ENCODE measurements at regions of chr16 and their contacts with region 1.

Region 1: DNA sequence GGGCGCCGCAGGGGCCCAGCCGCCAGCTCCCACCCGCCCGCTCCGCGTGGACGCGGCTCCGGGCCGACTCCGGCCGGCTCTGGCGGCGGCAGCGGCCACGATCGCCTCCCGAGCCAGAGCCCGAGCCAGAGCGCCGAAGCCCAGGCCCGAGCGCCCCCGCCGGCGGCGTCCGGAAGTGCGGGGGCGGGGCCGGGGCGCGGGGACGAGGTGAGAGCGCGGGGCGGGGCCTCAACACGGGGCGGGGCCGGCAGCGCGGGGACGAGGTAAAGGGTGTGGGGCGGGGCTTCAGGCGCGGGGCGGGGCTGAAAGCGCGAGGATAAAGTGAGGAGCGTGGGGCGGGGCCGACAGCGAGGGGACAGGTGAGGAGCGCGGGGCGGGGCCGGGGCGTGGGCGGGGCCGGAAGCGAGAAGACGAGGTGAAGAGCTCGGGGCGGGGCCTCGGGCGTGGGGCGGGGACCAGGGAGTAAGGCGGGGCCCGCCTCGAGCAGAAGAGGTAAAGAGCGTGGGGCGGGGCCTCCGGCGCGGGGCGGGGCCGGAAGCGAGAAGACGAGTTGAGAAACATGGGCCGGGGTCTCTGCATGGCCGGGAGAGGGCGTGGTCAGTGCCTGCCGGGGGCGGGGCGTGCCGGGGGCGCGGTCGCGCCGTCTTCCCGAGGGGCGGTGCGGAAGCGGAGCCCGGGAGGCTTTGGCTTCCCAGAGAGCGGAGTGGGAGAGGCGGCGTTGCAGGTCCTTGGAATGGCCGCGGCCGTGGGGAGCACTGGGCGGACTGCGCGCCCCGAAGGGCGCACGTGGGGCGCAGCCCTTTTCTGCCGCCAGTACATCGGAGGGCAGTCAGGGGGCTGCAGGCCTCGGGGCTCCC is at the start of gene AXIN1:
- DNase-seq: peak; percentile 93
- ATAC-seq: peak; percentile 79
- H3K4me3 ChIP-seq: peak within 1 kb of the TSS; percentile 67 to 84 (median 78)
- H3K27ac ChIP-seq: peak within 1 kb of the TSS; percentile 61
- H3K4me1 ChIP-seq: peaks cover 72% of the 10 kb centered on the region
- H3K27me3 ChIP-seq: no peaks in the 10 kb centered on the region
- CTCF ChIP-seq: peak; percentile 57; the same call in 1 of the 2 replicates
- EP300 ChIP-seq: no peak
- POLR2A ChIP-seq: peak; percentile 53 to 85
- RAD21 ChIP-seq: peak; percentile 58
- total RNA-seq, gene AXIN1: 18.8 and 24.0 TPM in 2 replicates

Region 2: GRCh38 chr16:228818-229730 is 123.7 kb before region 1 on chr16 and contains the start of gene LUC7L:
- CTCF ChIA-PET with region 1: no interaction called
- POLR2A ChIA-PET with region 1: interaction called, 10 read pairs
- in situ Hi-C with region 1: no loop called
- intact Hi-C with region 1: no loop called
- DNase-seq: peak; percentile 79
- ATAC-seq: peak; percentile 96
- H3K4me3 ChIP-seq: peak within 1 kb of the TSS; percentile 91 to 99 (median 96)
- H3K27ac ChIP-seq: peak within 1 kb of the TSS; percentile 94
- H3K4me1 ChIP-seq: peaks cover 32% of the 10 kb centered on the region
- H3K27me3 ChIP-seq: no peaks in the 10 kb centered on the region; a peak in 1 of 5 replicates
- CTCF ChIP-seq: no peak
- EP300 ChIP-seq: peak in 1 of 2 experiments; percentile 30; a peak in 1 of 4 replicates
- POLR2A ChIP-seq: peak; percentile 85 to 97
- RAD21 ChIP-seq: peak; percentile 61
- total RNA-seq, gene LUC7L: 37.3 and 56.9 TPM in 2 replicates

Region 3: DNA sequence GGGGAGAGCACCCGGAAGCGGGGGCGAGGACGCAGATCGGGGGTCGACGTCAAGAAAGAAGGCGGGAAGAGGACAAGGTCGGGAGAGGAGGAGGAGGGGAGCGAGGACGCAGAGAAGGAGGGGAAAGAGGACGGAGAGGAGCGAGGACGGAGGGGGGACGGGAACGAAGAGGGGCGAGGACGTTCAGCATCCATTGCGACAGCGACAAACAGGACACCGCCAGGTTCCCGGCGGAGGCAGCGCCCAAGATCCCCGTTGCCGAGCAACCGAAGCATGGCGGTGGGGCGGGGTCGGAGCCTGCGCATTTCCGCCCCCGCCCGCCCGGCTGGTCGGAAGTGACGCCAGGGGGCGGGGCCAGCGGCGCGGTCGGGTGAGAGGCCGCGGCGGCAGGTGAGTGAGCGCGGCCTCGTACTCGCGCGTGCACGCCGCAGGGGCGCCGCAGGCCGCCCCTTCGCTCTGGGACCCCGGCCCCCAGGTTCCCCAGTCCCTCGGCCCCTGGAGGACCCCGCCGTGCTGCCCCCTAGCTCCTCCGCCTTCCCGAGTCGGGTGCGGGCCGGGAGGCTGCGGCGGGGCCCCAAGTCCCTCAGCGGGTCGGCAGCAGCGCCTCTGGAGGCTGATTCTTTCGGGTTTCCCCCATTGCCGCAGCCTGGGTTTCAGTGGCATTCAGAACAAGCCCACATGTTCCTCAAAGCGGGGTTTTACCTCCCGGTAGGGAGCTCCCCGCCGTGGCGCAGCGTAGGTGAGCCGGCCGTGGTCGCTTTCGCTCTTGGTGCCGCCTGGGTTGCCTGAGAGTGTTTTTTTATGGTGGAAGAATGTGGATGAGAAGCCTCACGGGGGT is 118.1 kb before region 1 on chr16 and contains the start of gene FAM234A:
- CTCF ChIA-PET with region 1: no interaction called
- POLR2A ChIA-PET with region 1: interaction called, 11 read pairs
- in situ Hi-C with region 1: no loop called
- intact Hi-C with region 1: no loop called
- DNase-seq: peak; percentile 87
- ATAC-seq: peak; percentile 86
- H3K4me3 ChIP-seq: peak within 1 kb of the TSS; percentile 73 to 84 (median 81)
- H3K27ac ChIP-seq: peak within 1 kb of the TSS; percentile 85
- H3K4me1 ChIP-seq: peaks cover 15% of the 10 kb centered on the region
- H3K27me3 ChIP-seq: no peaks in the 10 kb centered on the region; a peak in 1 of 5 replicates
- CTCF ChIP-seq: peak; percentile 55
- EP300 ChIP-seq: 0 out of 4 replicates have a peak, but pooled peaks of 1 of the 2 experiments have one; percentile 6
- POLR2A ChIP-seq: peak; percentile 81 to 89
- RAD21 ChIP-seq: peak; percentile 29
- total RNA-seq, gene FAM234A: 15.5 and 29.2 TPM in 2 replicates

Region 4: DNA sequence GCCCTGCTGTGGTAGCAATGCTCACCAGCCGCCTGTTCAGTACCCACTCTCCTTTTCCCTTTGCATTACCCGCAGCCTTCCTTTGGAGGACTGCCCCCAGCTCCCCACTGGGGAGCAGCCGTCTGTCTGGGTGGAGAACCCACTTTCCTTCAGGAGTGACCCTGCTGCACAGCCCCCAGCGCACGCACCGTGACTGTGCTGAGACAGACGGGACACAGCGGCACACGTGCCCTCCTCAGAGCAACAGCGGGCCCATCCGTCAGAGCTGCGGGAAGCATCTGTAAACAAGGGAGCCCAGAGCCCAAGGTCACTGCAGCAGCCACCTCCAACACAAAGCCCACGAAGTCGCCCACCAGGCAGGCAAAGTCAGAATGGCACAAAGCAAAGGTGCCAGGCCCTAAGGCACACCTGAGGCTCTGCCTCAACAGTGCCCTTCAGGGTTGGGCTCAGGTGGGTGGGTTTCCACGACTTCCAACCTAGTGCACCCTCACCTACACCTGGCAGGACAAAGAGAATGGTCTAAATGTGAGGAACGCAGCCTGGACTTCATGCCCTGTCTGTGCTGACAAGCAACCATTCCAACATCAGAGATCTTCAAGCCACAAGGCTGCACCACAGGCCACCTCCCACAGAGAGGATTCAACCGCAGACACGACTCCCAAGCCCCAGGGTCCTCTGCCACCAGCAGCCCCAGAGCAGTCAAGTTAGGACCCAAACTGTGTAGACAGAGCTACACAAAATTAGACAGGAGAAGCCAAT is 10.1 kb before region 1 on chr16:
- CTCF ChIA-PET with region 1: no interaction called
- POLR2A ChIA-PET with region 1: interaction called, 31 read pairs
- in situ Hi-C with region 1: no loop called
- intact Hi-C with region 1: no loop called
- DNase-seq: peak; percentile 74
- ATAC-seq: peak; percentile 77
- H3K4me3 ChIP-seq: peak overlapping the region in 2 of 3 experiments; percentile 13 to 52; a peak in 2 of 6 replicates
- H3K27ac ChIP-seq: peak overlapping the region; percentile 90
- H3K4me1 ChIP-seq: peaks cover 80% of the 10 kb centered on the region
- H3K27me3 ChIP-seq: no peaks in the 10 kb centered on the region
- CTCF ChIP-seq: peak; percentile 84
- EP300 ChIP-seq: peak in 1 of 2 experiments; percentile 12; a peak in 1 of 4 replicates
- POLR2A ChIP-seq: peak; percentile 39 to 80; a peak in 3 of 4 replicates
- RAD21 ChIP-seq: peak; percentile 63; the same call in 1 of the 2 replicates

Region 5: DNA sequence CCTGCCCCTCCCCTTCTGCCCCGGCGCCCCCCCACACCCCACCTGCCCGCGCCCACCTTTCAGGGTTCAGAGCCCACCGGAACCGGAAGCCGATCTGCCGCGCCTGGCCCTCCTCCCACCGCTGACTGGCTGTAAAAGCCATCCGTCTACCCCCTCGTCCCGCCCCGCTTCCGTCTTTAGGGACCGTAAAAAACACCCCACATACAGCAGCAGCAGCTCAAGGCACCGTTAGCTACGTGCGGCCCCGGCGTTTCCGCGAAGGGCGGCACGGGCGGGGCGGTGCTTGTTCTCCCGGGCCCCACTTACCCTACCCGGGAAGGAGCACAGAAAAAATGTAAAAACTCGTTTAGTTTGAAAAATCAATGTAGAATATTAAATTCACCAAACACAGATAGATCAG is 17.7 kb after region 1 on chr16 and contains the start of gene MRPL28:
- CTCF ChIA-PET with region 1: no interaction called
- POLR2A ChIA-PET with region 1: interaction called, 10 read pairs
- in situ Hi-C with region 1: no loop called
- intact Hi-C with region 1: no loop called
- DNase-seq: peak; percentile 90
- ATAC-seq: peak; percentile 89
- H3K4me3 ChIP-seq: peak within 1 kb of the TSS; percentile 57 to 79 (median 75)
- H3K27ac ChIP-seq: peak within 1 kb of the TSS; percentile 44
- H3K4me1 ChIP-seq: peaks cover 28% of the 10 kb centered on the region
- H3K27me3 ChIP-seq: no peaks in the 10 kb centered on the region
- CTCF ChIP-seq: no peak
- EP300 ChIP-seq: peak in 1 of 2 experiments; percentile 40; a peak in 2 of 4 replicates
- POLR2A ChIP-seq: peak in 1 of 2 experiments; percentile 53; a peak in 2 of 4 replicates
- RAD21 ChIP-seq: no peak
- total RNA-seq, gene MRPL28: 114 and 128 TPM in 2 replicates

Measured in HepG2 (cell line).